ENCODE measurements at regions of chr20 and their contacts with region 1.

Region 1: GRCh38 chr20:53828682-53829254 is 235.1 kb upstream of the ZNF217 start:
- DNase-seq: peak in 3 of 5 donors; percentile 29 to 53 (median 39)
- ATAC-seq: peak; percentile 74 to 88 (median 84)
- H3K4me3 ChIP-seq: peak overlapping the region in 10 of 12 donors; percentile 13 to 45 (median 32)
- H3K27ac ChIP-seq: peak overlapping the region; percentile 74 to 93 (median 86)
- H3K4me1 ChIP-seq: peaks cover 0 to 48% (median 13%) of the 10 kb centered on the region in 12 donors
- H3K27me3 ChIP-seq: no peaks in the 10 kb centered on the region
- CTCF ChIP-seq: peak in 3 of 12 donors; percentile 26 to 35 (median 27)
- POLR2A ChIP-seq: no peak

Region 2: GRCh38 chr20:53594068-53595017 is 234.4 kb before region 1 on chr20:
- intact Hi-C with region 1: loop called in 1 of 10 experiments (anchors 5 kb)
- DNase-seq: peak; percentile 96 to 100 (median 98)
- ATAC-seq: peak; percentile 88 to 96 (median 90)
- H3K4me3 ChIP-seq: peak overlapping the region; percentile 63 to 96 (median 94)
- H3K27ac ChIP-seq: peak overlapping the region; percentile 90 to 100 (median 99)
- H3K4me1 ChIP-seq: peaks cover 0 to 57% (median 18%) of the 10 kb centered on the region in 12 donors
- H3K27me3 ChIP-seq: no peaks in the 10 kb centered on the region
- CTCF ChIP-seq: peak in 11 of 12 donors; percentile 12 to 59 (median 30)
- POLR2A ChIP-seq: peak; percentile 64 to 85

Region 3: GRCh38 chr20:53623454-53624211 is 205.1 kb before region 1 on chr20:
- intact Hi-C with region 1: loop called in 1 of 10 experiments (anchors 2 kb)
- DNase-seq: peak in 4 of 5 donors; percentile 67 to 76 (median 72)
- ATAC-seq: peak; percentile 84 to 94 (median 92)
- H3K4me3 ChIP-seq: peak overlapping the region in 11 of 12 donors; percentile 26 to 57 (median 51)
- H3K27ac ChIP-seq: peak overlapping the region; percentile 71 to 91 (median 82)
- H3K4me1 ChIP-seq: peaks cover 12 to 60% (median 27%) of the 10 kb centered on the region in 12 donors
- H3K27me3 ChIP-seq: no peaks in the 10 kb centered on the region
- CTCF ChIP-seq: peak in 1 of 12 donors; percentile 22
- POLR2A ChIP-seq: peak in 1 of 2 donors; percentile 34

Region 4: GRCh38 chr20:53750827-53751619 is 77.7 kb before region 1 on chr20:
- intact Hi-C with region 1: loop called in 1 of 10 experiments (anchors 10 kb)
- DNase-seq: no peak
- ATAC-seq: peak in 3 of 4 donors; percentile 37 to 60 (median 38)
- H3K4me3 ChIP-seq: no peak overlapping the region
- H3K27ac ChIP-seq: peak overlapping the region in 10 of 12 donors; percentile 3 to 71 (median 32)
- H3K4me1 ChIP-seq: peaks cover 0 to 29% (median 7%) of the 10 kb centered on the region in 12 donors
- H3K27me3 ChIP-seq: no peaks in the 10 kb centered on the region
- CTCF ChIP-seq: no peak
- POLR2A ChIP-seq: no peak

Region 5: DNA sequence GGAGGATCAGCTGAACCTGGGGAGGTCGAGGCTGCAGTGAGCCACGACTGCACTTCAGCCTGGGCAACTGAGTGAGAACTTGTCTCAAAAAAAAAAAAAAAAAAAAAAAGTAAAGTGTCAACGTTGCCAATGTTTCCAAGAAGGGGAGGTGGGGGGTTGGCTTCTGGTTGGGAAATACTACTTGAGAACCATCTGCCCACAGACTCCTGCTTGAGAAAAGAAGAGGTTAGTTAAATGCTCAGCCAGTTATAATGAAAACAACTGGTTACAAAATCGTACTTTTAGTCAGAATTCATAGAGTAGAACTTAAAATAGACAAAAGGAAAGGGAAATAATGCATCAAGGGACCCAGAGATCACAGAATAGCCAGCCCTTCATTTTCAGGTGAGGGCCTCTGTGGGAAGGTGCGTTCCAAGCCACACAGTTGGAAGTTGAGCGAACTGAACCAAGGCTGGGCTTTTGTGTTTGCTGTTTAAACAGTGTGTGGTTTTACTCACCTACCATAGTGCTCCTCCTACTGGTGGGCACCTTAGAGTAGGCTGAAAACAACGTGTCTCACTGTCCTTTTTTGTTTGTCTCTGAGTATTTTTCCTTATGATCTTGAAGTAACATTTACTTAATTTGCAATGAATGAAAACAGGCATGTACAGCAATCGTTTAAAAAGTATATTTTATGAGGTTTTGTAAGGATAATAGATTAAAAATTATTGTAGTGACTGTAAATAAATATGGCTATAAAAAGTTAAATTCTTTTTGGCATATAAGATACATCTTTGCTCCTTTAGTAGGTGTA is 40.9 kb after region 1 on chr20:
- intact Hi-C with region 1: loop called in 3 of 10 experiments (anchors 5 kb)
- DNase-seq: peak in 4 of 5 donors; percentile 54 to 67 (median 61)
- ATAC-seq: peak; percentile 72 to 94 (median 87)
- H3K4me3 ChIP-seq: peak overlapping the region in 1 of 12 donors; percentile 13
- H3K27ac ChIP-seq: peak overlapping the region in 4 of 12 donors; percentile 20 to 65 (median 52)
- H3K4me1 ChIP-seq: peaks cover 0 to 62% (median 22%) of the 10 kb centered on the region in 12 donors
- H3K27me3 ChIP-seq: no peaks in the 10 kb centered on the region
- CTCF ChIP-seq: peak; percentile 60 to 86 (median 76)
- POLR2A ChIP-seq: no peak

Region 6: DNA sequence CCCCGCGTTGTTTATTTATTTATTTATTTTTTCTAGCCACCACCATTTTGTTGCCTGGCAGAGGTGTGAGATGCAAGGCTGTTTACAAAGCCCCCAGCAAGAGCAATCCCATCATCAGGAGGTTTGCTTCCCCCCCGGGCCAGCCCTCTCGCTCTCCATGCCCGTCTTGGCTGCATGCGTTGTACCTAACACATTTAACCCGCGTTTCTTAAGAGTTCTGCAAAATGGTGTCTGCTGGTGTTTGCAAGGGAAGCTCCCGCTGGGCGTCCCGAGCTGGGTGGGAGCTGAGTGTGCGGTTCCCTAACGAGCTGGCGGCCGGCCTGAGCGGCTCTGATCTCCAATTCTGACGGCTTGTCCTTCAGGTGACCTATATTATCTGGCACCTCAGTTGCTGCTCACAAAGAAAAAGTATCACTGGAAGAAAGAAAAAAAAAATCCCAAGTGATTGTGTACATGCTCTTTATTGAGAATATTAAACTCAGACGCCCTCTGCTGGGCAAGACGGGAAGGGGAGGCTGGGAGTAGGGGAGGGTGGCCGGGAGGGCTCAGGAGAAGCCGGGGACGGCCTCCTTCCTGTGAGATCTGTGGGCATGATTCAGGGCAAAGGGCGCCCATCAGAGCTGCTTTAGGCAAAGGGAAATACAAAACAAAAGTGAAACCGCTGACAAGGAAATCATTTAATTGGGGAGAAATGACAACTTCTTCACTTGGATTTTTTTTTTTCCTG is 86.8 kb after region 1 on chr20:
- intact Hi-C with region 1: loop called in 1 of 10 experiments (anchors 5 kb)
- DNase-seq: peak; percentile 94 to 97 (median 95)
- ATAC-seq: peak; percentile 86 to 92 (median 90)
- H3K4me3 ChIP-seq: peak overlapping the region; percentile 53 to 80 (median 66)
- H3K27ac ChIP-seq: peak overlapping the region; percentile 79 to 94 (median 88)
- H3K4me1 ChIP-seq: peaks cover 0 to 46% (median 29%) of the 10 kb centered on the region in 12 donors
- H3K27me3 ChIP-seq: no peaks in the 10 kb centered on the region
- CTCF ChIP-seq: peak; percentile 79 to 98 (median 88)
- POLR2A ChIP-seq: no peak

Measured in heart left ventricle (tissue), 16 donors.